ENCODE measurements at regions of chr16 and their contacts with region 1.

Region 1: DNA sequence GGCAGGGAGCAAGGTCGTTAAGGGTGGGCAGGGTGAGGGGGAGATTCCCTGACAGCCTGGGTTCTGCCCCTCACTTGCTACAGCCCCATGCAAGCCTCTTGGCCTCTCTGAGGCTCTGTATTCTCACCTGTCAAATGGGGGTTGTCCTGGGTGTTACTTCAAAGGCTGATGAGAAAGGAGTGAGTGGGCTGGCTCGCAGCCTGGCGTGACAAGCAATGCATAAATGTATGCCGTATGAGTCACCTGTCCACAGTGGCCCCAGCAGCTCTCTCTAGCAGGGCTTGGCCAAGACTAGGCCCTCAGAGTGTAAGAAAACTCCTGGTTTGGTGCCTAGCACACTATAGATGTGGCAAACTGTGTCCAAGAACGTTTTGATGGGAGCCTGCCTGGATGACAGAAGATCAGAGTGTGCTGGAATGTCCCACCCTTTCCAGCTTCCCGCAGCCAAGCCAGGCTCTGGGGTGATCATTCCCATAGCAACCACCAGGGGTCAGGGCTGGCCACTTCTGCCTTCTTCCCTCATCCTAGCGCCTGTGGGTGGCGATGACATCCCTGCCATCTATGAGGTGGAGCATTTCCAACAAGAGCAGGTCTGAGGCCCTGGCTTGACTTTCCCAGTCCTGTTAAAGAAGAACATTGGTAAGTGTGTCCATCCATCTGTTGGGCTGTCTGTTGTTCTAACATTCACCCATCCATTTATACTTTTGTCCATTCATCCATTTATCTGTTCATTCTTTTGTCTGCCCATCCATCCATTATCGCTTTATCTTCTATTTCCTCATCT is 37.2 kb upstream of the ADGRG1 start:
- DNase-seq: peak; percentile 72
- H3K4me3 Mint-ChIP-seq: peak overlapping the region; percentile 53
- H3K27ac Mint-ChIP-seq: peak overlapping the region; percentile 92
- H3K4me1 Mint-ChIP-seq: peaks cover 58% of the 10 kb centered on the region
- H3K27me3 Mint-ChIP-seq: no peaks in the 10 kb centered on the region

Region 2: GRCh38 chr16:57609541-57610401 is 18.5 kb after region 1 on chr16:
- CTCF ChIA-PET with region 1: interaction called, 15 read pairs
- POLR2A ChIA-PET with region 1: no interaction called
- DNase-seq: peak; percentile 82
- H3K4me3 Mint-ChIP-seq: peak overlapping the region; percentile 53
- H3K27ac Mint-ChIP-seq: peak overlapping the region; percentile 95
- H3K4me1 Mint-ChIP-seq: peaks cover 59% of the 10 kb centered on the region
- H3K27me3 Mint-ChIP-seq: no peaks in the 10 kb centered on the region

Region 3: GRCh38 chr16:57653936-57654335 is 62.7 kb after region 1 on chr16:
- CTCF ChIA-PET with region 1: interaction called, 55 read pairs
- POLR2A ChIA-PET with region 1: no interaction called
- DNase-seq: no peak
- H3K4me3 Mint-ChIP-seq: no peak overlapping the region
- H3K27ac Mint-ChIP-seq: no peak overlapping the region
- H3K4me1 Mint-ChIP-seq: peaks cover 17% of the 10 kb centered on the region
- H3K27me3 Mint-ChIP-seq: no peaks in the 10 kb centered on the region